ENCODE measurements at regions of chr5 and their contacts with region 1.

Region 1: DNA sequence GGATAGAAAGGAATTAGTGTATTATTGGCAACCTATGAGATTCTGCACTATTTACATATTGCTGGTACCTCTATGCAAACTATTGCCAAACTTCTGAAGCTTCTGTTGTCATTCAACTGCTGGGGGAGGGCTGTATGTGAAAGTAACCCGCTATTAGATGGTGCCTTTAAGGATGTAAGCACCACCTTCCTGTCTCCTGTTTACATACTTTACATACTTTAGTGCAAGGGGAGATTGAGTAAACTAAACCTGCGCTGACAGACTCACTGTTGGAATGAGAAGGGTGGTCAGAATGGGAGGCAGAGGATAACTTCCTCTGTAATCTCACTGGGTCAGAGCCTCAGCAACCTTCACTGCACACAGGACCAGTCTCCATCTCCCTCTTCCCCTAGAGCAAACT is 123.8 kb downstream of the NR3C1 start:
- DNase-seq: no peak
- ATAC-seq: no peak
- H3K4me3 Mint-ChIP-seq: no peak overlapping the region
- H3K27ac Mint-ChIP-seq: no peak overlapping the region
- H3K4me1 Mint-ChIP-seq: no peaks in the 10 kb centered on the region
- H3K27me3 Mint-ChIP-seq: no peaks in the 10 kb centered on the region

Region 2: DNA sequence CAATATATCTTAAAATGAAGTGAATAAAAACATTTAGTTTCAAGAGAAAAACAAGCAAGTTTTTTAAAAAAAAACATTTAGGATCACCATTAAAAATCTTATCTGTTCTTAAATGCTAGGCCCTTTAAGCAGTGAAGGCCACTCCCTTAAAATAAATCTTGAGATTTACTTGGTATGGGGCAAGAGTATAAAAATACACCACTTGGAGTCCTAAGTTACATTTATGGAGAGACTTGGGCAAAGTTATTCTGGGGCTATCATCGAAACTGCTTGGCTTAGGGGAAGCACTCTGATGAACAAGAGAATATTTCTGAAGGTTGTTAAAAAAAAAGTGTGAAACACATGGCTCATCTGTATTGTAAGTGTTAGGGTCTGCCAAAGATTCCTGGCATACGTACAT is 26.3 kb after region 1 on chr5:
- CTCF ChIA-PET with region 1: no interaction called
- POLR2A ChIA-PET with region 1: no interaction called
- intact Hi-C with region 1: loop called in 1 of 2 experiments (anchors 1 kb)
- DNase-seq: no peak
- ATAC-seq: no peak
- H3K4me3 Mint-ChIP-seq: no peak overlapping the region
- H3K27ac Mint-ChIP-seq: no peak overlapping the region
- H3K4me1 Mint-ChIP-seq: peaks cover 37% of the 10 kb centered on the region
- H3K27me3 Mint-ChIP-seq: no peaks in the 10 kb centered on the region